Heart right ventricle (tissue), 16 donors: ENCODE measurements at regions of chr11 and their contacts with region 1.

Region 1: GRCh38 chr11:35822815-35823495 is 120.9 kb upstream of the LDLRAD3 start:
- DNase-seq: no peak
- ATAC-seq: no peak
- H3K4me3 ChIP-seq: no peak overlapping the region
- H3K27ac ChIP-seq: no peak overlapping the region
- H3K4me1 ChIP-seq: peaks cover 0 to 34% (median 25%) of the 10 kb centered on the region in 9 donors
- H3K27me3 ChIP-seq: no peaks in the 10 kb centered on the region
- CTCF ChIP-seq: no peak

Region 2: DNA sequence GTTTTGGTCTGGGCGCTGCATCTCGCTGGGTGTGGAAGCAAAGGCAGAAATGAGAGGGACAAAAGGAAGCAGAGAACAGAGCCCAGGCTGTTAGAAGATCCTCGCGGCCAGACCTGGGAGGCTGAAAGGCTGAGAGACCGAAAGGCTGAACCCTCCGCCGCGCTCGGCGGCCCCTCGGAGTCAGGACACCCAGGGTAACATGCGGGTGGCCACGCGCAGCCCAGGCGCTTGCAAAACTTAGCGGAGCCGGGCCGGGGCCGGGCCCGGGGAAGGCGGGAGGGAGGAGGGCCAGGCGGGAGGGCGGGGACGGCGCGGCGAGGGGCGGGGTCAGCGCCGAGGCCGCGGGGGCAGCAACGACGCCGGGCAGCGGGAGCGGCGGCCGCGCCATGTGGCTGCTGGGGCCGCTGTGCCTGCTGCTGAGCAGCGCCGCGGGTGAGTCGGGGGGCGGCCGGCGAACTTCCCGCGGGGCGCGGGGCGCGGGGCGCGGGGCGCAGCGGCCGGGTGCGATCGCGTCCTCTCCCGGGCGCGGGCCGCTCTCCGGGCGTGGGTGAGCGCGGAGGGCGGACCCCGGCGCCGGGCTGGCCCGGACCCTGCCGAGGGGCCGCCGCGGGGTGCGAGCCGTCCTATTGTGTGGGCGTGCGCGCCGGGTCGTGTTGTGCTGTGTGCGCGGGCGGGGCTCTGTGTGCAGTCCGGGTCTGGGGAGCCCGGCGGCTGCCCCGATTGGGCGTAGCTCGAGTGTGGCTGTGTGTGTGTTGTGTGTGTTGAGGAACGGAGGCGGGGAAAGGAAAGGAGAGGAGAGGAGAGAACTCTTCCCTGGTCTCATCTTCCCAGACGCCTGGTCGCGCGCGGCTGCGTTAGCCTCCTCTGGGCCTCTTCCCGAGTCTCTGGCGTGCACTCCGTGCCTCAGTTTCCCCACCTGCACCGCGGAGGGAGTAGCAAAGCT is 121.0 kb after region 1 on chr11 and contains the start of gene LDLRAD3:
- intact Hi-C with region 1: loop called in 1 of 10 experiments (anchors 10 kb)
- DNase-seq: peak; percentile 60 to 84
- ATAC-seq: peak; percentile 86 to 95 (median 92)
- H3K4me3 ChIP-seq: peak within 1 kb of the TSS; percentile 36 to 69 (median 61)
- H3K27ac ChIP-seq: peak within 1 kb of the TSS in 9 of 10 donors; percentile 15 to 85 (median 53)
- H3K4me1 ChIP-seq: peaks cover 0 to 23% (median 17%) of the 10 kb centered on the region in 9 donors
- H3K27me3 ChIP-seq: peaks cover 0 to 15% (median 0%) of the 10 kb centered on the region in 7 donors
- CTCF ChIP-seq: no peak
- total RNA-seq, gene LDLRAD3: 0.87 to 5.1 (median 1.7) TPM

Region 3: GRCh38 chr11:36123346-36124101 is 300.6 kb after region 1 on chr11:
- intact Hi-C with region 1: loop called in 1 of 10 experiments (anchors 10 kb)
- DNase-seq: no peak
- ATAC-seq: no peak
- H3K4me3 ChIP-seq: no peak overlapping the region
- H3K27ac ChIP-seq: no peak overlapping the region
- H3K4me1 ChIP-seq: no peaks in the 10 kb centered on the region
- H3K27me3 ChIP-seq: peaks cover 0 to 21% (median 6%) of the 10 kb centered on the region in 7 donors
- CTCF ChIP-seq: no peak

Region 4: DNA sequence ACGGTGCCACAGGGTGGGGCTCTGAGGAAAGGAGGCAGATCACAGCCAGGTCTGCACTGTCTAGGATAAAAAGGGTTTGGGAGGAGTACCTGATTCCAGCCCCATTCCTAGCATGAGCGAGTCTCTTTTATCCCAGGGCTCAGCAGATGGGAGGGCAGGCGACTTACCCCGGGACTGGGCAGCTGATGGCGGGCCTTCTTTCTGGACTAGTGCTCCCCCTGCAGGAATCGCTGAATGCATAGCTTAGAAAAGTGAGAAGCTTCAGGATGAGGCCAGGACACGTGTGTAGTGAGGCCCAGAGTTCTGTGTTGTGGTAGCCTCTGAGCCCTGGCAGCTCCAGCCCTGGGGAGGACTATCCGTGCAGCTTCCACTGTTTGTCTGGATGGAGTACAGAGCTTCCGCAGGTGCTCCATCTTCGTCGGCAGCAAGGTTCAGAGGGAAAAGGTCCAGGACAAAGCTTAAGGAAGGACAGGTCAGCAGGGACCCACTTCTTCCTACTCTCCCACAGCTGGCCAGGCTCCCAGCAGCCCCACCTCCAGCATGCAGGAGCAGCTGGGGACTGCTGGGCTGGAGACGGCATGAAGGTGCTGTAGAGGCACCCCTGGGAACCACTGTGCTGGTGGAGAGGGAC is 435.9 kb after region 1 on chr11:
- intact Hi-C with region 1: loop called in 6 of 10 experiments (anchors 10 kb)
- DNase-seq: peak; percentile 31 to 44
- ATAC-seq: peak; percentile 74 to 88 (median 85)
- H3K4me3 ChIP-seq: no peak overlapping the region
- H3K27ac ChIP-seq: no peak overlapping the region
- H3K4me1 ChIP-seq: peaks cover 0 to 9% (median 0%) of the 10 kb centered on the region in 9 donors
- H3K27me3 ChIP-seq: peaks cover 0 to 33% (median 7%) of the 10 kb centered on the region in 7 donors
- CTCF ChIP-seq: peak; percentile 19 to 71 (median 63)